Heart left ventricle (tissue), 16 donors: ENCODE measurements at regions of chr5 and their contacts with region 1.

Region 1: GRCh38 chr5:71740015-71740753 is 21.1 kb downstream of the CARTPT start:
- DNase-seq: no peak
- ATAC-seq: no peak
- H3K4me3 ChIP-seq: no peak overlapping the region
- H3K27ac ChIP-seq: no peak overlapping the region
- H3K4me1 ChIP-seq: no peaks in the 10 kb centered on the region
- H3K27me3 ChIP-seq: no peaks in the 10 kb centered on the region
- CTCF ChIP-seq: no peak
- POLR2A ChIP-seq: no peak

Region 2: DNA sequence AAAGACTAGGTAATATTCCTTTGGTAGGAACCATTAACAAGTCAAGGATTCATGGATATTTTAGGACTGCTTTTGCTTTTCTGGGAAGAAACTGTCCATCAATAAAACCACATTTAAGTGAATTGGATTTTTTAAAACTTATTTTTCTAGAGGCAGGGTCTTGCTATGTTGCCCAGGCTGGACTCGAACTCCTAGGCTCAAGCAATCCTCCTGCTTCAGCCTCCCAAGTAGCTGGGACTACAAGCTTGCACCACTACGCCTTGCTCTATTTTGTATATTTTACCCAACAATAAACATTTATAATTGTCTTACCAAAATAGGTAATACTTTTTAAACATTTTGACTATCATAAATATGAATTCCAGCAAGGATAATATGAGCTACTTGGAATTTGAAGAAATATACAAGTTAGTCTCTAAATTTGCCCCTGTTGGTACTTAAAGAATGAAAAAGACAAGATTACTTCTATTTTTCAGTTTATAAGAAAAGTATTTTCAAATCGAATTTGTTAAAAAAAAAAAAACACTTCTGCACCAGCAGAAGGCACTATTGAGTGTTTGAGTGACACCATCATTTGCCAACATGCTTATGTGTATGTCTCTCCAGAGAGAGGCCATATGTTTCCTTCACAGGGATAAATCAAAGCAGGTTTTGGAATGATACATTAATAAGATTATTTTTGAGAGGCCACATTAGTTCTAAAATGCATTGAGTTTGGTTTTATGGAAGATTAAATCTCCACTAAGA is 81.1 kb before region 1 on chr5:
- intact Hi-C with region 1: loop called in 1 of 10 experiments (anchors 10 kb)
- DNase-seq: no peak
- ATAC-seq: no peak
- H3K4me3 ChIP-seq: no peak overlapping the region
- H3K27ac ChIP-seq: no peak overlapping the region
- H3K4me1 ChIP-seq: no peaks in the 10 kb centered on the region
- H3K27me3 ChIP-seq: no peaks in the 10 kb centered on the region
- CTCF ChIP-seq: peak in 2 of 12 donors; percentile 5 to 8
- POLR2A ChIP-seq: no peak

Region 3: DNA sequence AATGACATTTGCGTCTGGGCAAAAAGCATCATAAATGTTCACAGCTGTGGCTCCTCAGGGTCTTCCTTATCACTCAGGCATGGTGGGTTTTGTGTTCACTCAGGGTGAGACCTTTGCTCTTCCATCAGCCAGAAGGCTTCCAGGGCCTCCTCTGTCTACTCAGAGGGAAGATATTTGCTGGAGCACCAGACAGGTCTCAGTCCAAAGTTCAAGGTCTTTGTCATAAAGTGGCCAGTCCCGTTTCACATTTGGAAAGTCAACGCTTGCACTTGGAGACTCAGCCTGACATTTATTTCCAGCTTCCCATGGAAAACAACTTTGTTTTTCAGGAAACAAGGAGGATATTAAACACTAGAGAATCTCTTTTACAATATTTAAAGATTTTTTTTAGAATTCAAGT is 33.3 kb before region 1 on chr5:
- intact Hi-C with region 1: no loop called
- DNase-seq: no peak
- ATAC-seq: no peak
- H3K4me3 ChIP-seq: no peak overlapping the region
- H3K27ac ChIP-seq: no peak overlapping the region
- H3K4me1 ChIP-seq: no peaks in the 10 kb centered on the region
- H3K27me3 ChIP-seq: peaks cover 0 to 31% (median 0%) of the 10 kb centered on the region in 9 donors
- CTCF ChIP-seq: no peak
- POLR2A ChIP-seq: no peak